ENCODE measurements at regions of chr15 and their contacts with region 1.

Region 1: DNA sequence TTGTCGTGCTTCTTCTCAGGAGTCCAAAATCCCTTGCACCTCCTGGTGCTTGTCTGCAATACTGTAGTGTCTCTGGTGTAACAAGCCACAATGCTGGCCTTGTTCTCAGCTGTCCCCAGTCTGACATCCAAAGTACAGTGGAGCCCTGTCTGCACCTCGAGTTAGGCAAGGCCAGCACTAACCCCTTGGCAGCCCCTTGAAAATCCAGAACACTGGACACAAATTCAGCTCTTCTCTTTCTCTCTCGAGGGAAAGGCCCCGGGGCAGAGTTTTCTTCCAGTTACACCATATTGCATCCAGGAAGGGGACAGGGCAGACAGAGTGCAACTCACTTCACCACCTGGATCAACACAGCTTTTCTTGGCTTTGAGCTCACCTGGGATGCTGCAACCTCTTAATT is 91.3 kb upstream of the ATP10A start:
- DNase-seq: no peak
- H3K4me3 ChIP-seq: no peak overlapping the region
- H3K4me3 Mint-ChIP-seq: no peak overlapping the region
- H3K27ac Mint-ChIP-seq: no peak overlapping the region
- H3K4me1 ChIP-seq: no peaks in the 10 kb centered on the region
- H3K4me1 Mint-ChIP-seq: no peaks in the 10 kb centered on the region
- H3K27me3 ChIP-seq: no peaks in the 10 kb centered on the region
- H3K27me3 Mint-ChIP-seq: peaks cover 4% of the 10 kb centered on the region
- CTCF ChIP-seq: no peak

Region 2: GRCh38 chr15:26028086-26028740 is 73.8 kb after region 1 on chr15:
- CTCF ChIA-PET with region 1: no interaction called
- POLR2A ChIA-PET with region 1: no interaction called
- intact Hi-C with region 1: loop called (anchors 10 kb)
- DNase-seq: no peak
- H3K4me3 ChIP-seq: no peak overlapping the region
- H3K4me3 Mint-ChIP-seq: no peak overlapping the region
- H3K27ac Mint-ChIP-seq: no peak overlapping the region
- H3K4me1 ChIP-seq: peaks cover 38% of the 10 kb centered on the region
- H3K4me1 Mint-ChIP-seq: peaks cover 36% of the 10 kb centered on the region
- H3K27me3 ChIP-seq: no peaks in the 10 kb centered on the region
- H3K27me3 Mint-ChIP-seq: no peaks in the 10 kb centered on the region
- CTCF ChIP-seq: no peak